Heart right ventricle (tissue), 16 donors: ENCODE measurements at regions of chr3 and their contacts with region 1.

Region 1: GRCh38 chr3:32934150-32934742 is 17.2 kb upstream of the CCR4 start:
- DNase-seq: no peak
- ATAC-seq: no peak
- H3K4me3 ChIP-seq: no peak overlapping the region
- H3K27ac ChIP-seq: no peak overlapping the region
- H3K4me1 ChIP-seq: no peaks in the 10 kb centered on the region
- H3K27me3 ChIP-seq: no peaks in the 10 kb centered on the region
- CTCF ChIP-seq: peak; percentile 19 to 72 (median 60)

Region 2: DNA sequence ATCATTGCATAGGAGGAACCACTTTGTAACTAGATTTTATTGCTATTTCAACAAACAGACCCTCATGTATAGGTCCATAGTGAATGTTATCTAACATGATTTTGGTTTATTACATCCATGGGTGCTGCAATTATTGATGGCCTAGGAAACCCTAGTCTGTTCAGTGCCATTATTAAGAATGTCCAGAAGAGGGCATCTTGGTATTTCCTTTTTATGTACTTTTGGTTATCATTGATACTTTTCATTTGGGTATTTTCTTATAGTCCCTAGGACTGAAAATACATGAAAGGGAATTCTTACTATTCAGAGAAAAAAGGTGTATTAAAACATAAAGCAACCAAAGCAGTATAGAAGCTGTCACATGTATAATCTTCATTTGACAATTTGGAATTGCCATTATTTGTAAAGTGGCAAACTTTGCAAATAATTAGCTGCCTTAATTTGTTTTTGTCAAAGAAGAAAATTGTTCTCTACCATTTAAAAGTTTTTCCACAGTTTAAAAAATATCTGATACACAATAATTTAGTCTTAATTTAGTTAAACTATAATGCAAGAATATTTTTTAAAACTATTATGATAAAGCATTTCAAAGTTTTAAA is 200.5 kb before region 1 on chr3:
- intact Hi-C with region 1: loop called (anchors 2 to 10 kb)
- DNase-seq: no peak
- ATAC-seq: no peak
- H3K4me3 ChIP-seq: no peak overlapping the region
- H3K27ac ChIP-seq: no peak overlapping the region
- H3K4me1 ChIP-seq: no peaks in the 10 kb centered on the region
- H3K27me3 ChIP-seq: no peaks in the 10 kb centered on the region
- CTCF ChIP-seq: peak; percentile 18 to 68 (median 60)

Region 3: GRCh38 chr3:32781210-32781968 is 152.9 kb before region 1 on chr3:
- intact Hi-C with region 1: loop called in 1 of 10 experiments (anchors 10 kb)
- DNase-seq: peak; percentile 58 to 78
- ATAC-seq: peak; percentile 91 to 96 (median 94)
- H3K4me3 ChIP-seq: peak overlapping the region; percentile 40 to 67 (median 58)
- H3K27ac ChIP-seq: no peak overlapping the region
- H3K4me1 ChIP-seq: peaks cover 0 to 9% (median 6%) of the 10 kb centered on the region in 9 donors
- H3K27me3 ChIP-seq: no peaks in the 10 kb centered on the region
- CTCF ChIP-seq: peak; percentile 61 to 93 (median 85)